ENCODE measurements at regions of chr1 and their contacts with region 1.

Region 1: DNA sequence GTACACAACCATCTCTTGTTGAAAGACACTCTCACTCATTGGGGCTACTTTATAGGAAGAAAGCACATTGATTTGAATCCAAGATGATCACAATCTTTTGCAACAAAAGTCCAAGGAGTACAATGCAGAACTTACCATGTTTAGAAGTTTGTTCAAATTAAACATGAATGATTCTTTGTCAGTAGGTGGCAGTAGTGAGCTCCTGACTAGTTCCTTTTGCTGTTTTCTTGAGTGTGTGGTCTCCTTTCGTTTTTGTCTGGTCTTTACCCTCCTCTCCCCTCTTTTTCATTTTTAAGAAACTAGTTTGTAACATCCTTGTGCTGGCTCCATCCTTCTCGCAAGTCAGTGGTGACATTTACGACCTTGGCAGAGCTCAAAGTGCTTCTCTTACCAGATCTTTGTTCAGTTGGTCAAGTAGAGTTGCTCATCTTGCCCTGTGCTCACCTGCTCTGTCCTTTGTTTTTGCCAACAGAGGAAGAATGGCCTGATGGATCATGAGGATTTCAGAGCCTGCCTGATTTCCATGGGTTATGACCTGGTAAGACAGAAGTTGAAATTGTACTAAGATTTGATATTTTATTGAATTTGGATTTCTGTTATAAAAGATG is 35.7 kb upstream of the MTR start:
- H3K4me3 ChIP-seq: no peak overlapping the region
- H3K27ac ChIP-seq: no peak overlapping the region
- H3K4me1 ChIP-seq: no peaks in the 10 kb centered on the region
- CTCF ChIP-seq: peak; percentile 71

Region 2: GRCh38 chr1:236603991-236604904 is 155.1 kb before region 1 on chr1 and contains the start of gene HEATR1:
- CTCF ChIA-PET with region 1: interaction called, 17 read pairs
- POLR2A ChIA-PET with region 1: interaction called, 4 read pairs
- H3K4me3 ChIP-seq: peak within 1 kb of the TSS; percentile 74
- H3K27ac ChIP-seq: peak within 1 kb of the TSS; percentile 76
- H3K4me1 ChIP-seq: peaks cover 7% of the 10 kb centered on the region
- CTCF ChIP-seq: peak; percentile 61; the same call in 1 of the 2 replicates

Region 3: DNA sequence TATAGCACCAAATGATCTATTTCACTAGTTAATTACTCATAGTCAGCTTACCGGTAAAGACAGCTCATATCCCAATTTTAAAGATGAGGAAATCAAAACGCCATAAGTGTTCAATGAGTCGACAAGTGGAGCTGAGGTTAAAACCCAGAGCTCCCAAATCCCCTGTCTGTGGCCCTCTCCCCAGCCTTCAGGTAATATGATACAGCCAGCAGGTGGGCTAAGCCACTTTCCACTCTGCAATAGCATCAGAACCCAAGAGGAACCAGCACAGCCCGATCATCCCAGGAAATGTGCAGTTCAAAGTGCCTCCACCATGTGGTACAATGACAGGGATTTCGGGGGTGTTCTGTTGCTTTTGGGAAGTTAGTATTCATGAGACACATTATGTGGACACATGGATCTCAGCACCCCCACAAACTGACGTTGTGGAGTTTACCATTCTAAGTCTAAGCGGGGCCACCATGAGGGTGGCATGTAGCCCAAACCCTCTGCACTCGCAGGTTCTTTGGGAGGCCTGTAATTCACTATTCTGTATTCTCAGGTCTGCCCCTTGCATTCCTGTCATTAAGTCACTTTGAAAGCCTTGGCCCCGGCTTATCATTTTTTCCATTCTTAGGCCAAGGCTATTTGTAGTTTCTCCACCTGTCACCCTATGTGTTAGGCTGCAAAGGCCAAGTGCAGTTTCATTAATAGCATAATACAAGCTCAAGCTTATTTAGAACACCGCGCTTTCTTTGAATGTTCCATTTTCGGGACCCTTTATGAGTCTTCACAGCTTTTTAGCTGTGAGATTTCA is 99.4 kb before region 1 on chr1:
- CTCF ChIA-PET with region 1: no interaction called
- POLR2A ChIA-PET with region 1: no interaction called
- H3K4me3 ChIP-seq: no peak overlapping the region
- H3K27ac ChIP-seq: no peak overlapping the region
- H3K4me1 ChIP-seq: no peaks in the 10 kb centered on the region
- CTCF ChIP-seq: no peak

Region 4: DNA sequence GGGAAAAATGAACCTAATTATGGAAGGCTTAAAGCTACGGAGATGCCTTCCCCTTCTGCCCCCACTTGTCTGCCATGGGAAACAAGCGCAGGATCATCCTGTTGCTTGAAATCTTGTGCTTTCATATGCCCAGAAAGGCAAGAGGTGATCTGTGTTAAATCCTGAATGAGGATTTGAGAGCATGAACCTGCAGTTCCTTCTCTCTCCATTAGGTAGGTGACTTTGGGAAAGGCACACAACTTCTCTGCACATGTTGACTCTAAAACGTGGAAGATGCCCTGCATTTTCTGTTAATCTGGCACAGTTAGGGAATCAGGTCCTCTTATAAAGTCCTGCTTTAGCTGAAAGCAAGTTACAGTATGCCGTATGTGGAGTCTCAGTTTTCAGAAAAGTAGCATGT is 10.9 kb before region 1 on chr1:
- CTCF ChIA-PET with region 1: interaction called, 43 read pairs
- POLR2A ChIA-PET with region 1: no interaction called
- H3K4me3 ChIP-seq: no peak overlapping the region
- H3K27ac ChIP-seq: no peak overlapping the region
- H3K4me1 ChIP-seq: no peaks in the 10 kb centered on the region
- CTCF ChIP-seq: no peak; the same call in 1 of the 2 replicates

Region 5: GRCh38 chr1:236786453-236786852 is 27.1 kb after region 1 on chr1:
- CTCF ChIA-PET with region 1: interaction called, 22 read pairs
- POLR2A ChIA-PET with region 1: no interaction called
- H3K4me3 ChIP-seq: no peak overlapping the region
- H3K27ac ChIP-seq: no peak overlapping the region
- H3K4me1 ChIP-seq: no peaks in the 10 kb centered on the region
- CTCF ChIP-seq: no peak

Region 6: DNA sequence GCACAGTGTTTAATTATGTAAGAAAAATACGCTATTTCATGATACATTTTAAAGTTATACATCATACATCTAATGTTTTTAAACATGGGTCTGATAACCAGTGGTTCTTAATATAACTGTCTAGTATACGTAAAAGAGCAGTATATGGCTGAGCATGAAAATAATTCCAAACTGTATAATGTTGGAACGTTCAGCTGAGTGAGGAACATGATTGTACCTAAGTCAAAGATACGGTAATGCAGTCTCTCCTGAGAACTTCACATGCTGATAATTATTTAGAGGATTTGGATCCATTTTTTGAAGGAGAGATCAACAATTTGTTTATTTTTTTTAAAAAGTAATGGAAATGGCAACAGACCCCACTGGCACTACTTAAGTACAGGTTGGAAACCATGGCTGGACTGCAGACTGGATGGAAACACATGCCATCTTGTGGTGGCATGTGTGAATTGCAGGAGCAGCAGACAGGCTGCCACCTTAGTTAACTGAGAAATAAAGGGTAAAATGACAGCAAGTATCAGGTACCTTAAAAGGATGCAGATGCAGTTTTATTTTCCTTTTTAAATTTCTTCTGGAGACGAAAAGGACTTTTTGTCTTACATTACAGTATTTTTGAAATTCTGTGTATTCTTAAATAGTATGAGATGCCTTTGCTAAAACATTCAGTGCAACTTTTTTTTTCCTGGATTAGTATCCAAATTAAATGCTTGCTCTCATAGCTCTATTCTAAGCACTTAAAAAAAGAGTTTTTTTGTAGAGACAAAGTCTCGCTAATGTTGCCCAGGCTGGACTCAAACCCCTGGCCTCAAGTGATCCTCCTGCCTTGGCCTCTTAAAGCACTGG is 109.5 kb after region 1 on chr1:
- CTCF ChIA-PET with region 1: interaction called, 18 read pairs
- POLR2A ChIA-PET with region 1: no interaction called
- H3K4me3 ChIP-seq: no peak overlapping the region
- H3K27ac ChIP-seq: no peak overlapping the region
- H3K4me1 ChIP-seq: no peaks in the 10 kb centered on the region
- CTCF ChIP-seq: peak; percentile 64

Region 7: GRCh38 chr1:237394281-237394680 is 634.9 kb after region 1 on chr1:
- CTCF ChIA-PET with region 1: interaction called, 10 read pairs
- POLR2A ChIA-PET with region 1: no interaction called
- H3K4me3 ChIP-seq: no peak overlapping the region
- H3K27ac ChIP-seq: no peak overlapping the region
- H3K4me1 ChIP-seq: no peaks in the 10 kb centered on the region
- CTCF ChIP-seq: no peak

Measured in HEK293 (cell line).